GM18951 (cell line): ENCODE measurements at regions of chr11 and their contacts with region 1.

Region 1: GRCh38 chr11:32435511-32435941 is at the start of gene WT1:
- POLR2A ChIP-seq: no peak

Region 2: GRCh38 chr11:31809857-31810778 is 625.4 kb before region 1 on chr11:
- in situ Hi-C with region 1: loop called (anchors 10 kb)
- POLR2A ChIP-seq: no peak